ENCODE measurements at regions of chr18 and their contacts with region 1.

Region 1: GRCh38 chr18:11995445-11996189 is 14.3 kb downstream of the IMPA2 start:
- DNase-seq: peak; percentile 75
- ATAC-seq: peak; percentile 84
- H3K4me3 ChIP-seq: peak overlapping the region in 1 of 3 experiments; percentile 65; a peak in 3 of 6 replicates
- H3K27ac ChIP-seq: peak overlapping the region; percentile 70
- H3K4me1 ChIP-seq: peaks cover 97% of the 10 kb centered on the region
- H3K27me3 ChIP-seq: no peaks in the 10 kb centered on the region
- CTCF ChIP-seq: peak; percentile 91
- EP300 ChIP-seq: no peak
- POLR2A ChIP-seq: no peak
- RAD21 ChIP-seq: peak; percentile 92

Region 2: DNA sequence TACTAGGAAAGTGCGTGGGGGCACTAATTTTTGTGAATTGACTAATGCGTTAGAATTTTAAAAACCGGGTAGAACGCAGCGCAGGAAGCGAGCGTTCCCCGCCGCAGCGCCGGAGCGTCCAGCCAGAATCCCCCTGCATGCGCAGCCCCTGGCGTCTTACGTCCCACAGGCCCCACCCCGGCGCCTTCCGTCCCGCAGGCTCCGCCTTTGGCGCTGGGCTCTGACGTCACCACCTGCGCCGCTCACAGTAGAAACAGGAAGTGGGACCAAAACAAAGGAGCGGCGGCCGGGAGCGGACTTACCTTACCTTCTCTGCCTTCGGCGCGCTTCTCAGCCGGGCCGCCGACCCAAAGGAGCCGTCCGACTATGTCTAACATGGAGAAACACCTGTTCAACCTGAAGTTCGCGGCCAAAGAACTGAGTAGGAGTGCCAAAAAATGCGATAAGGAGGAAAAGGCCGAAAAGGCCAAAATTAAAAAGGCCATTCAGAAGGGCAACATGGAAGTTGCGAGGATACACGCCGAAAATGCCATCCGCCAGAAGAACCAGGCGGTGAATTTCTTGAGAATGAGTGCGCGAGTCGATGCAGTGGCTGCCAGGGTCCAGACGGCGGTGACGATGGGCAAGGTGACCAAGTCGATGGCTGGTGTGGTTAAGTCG is 144.3 kb before region 1 on chr18 and contains the start of gene CHMP1B:
- CTCF ChIA-PET with region 1: no interaction called
- POLR2A ChIA-PET with region 1: interaction called, 6 read pairs
- in situ Hi-C with region 1: no loop called
- intact Hi-C with region 1: loop called (anchors 10 kb)
- DNase-seq: peak; percentile 91
- ATAC-seq: peak; percentile 91
- H3K4me3 ChIP-seq: peak within 1 kb of the TSS; percentile 68 to 93 (median 83)
- H3K27ac ChIP-seq: peak within 1 kb of the TSS; percentile 80
- H3K4me1 ChIP-seq: peaks cover 49% of the 10 kb centered on the region
- H3K27me3 ChIP-seq: no peaks in the 10 kb centered on the region; a peak in 2 of 5 replicates
- CTCF ChIP-seq: no peak
- EP300 ChIP-seq: peak in 1 of 2 experiments; percentile 39; a peak in 2 of 4 replicates
- POLR2A ChIP-seq: peak; percentile 93 to 96
- RAD21 ChIP-seq: no peak
- total RNA-seq, gene CHMP1B: 18.8 and 24.0 TPM in 2 replicates

Region 3: DNA sequence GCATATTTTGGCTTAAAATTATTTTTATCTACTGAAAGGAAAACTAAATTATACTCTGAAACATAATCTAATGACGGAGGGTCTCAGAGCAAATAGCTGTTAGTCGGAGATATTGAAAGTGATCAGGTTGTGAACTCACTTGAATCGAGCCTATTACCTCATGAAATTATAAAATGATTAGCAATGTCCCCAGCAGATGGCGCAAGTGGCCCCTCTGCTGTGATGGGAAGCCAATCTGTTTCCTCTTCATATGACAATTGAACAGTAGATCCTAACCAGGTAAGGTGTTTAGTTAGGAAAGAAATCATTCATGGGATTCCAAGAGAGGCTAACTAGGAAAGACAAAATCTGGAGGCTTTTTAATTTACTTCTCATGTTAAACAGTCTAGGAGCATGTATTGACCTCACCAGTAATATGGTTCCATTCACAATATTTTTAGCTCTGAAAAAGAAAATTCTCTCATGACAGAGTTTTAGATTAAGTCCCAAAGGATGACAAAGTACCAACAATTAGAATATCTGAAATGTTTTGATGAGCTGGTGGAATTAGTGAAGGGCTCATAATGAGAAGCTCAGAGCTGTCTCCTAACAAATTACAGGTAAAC is 57.6 kb before region 1 on chr18:
- CTCF ChIA-PET with region 1: interaction called, 51 read pairs
- POLR2A ChIA-PET with region 1: interaction called, 24 read pairs
- in situ Hi-C with region 1: loop called (anchors 5 kb)
- intact Hi-C with region 1: loop called (anchors 1 kb)
- DNase-seq: peak; percentile 48
- ATAC-seq: peak; percentile 68
- H3K4me3 ChIP-seq: no peak overlapping the region
- H3K27ac ChIP-seq: no peak overlapping the region
- H3K4me1 ChIP-seq: no peaks in the 10 kb centered on the region
- H3K27me3 ChIP-seq: no peaks in the 10 kb centered on the region; a peak in 1 of 5 replicates
- CTCF ChIP-seq: peak; percentile 87
- EP300 ChIP-seq: no peak
- POLR2A ChIP-seq: no peak
- RAD21 ChIP-seq: peak; percentile 86

Region 4: DNA sequence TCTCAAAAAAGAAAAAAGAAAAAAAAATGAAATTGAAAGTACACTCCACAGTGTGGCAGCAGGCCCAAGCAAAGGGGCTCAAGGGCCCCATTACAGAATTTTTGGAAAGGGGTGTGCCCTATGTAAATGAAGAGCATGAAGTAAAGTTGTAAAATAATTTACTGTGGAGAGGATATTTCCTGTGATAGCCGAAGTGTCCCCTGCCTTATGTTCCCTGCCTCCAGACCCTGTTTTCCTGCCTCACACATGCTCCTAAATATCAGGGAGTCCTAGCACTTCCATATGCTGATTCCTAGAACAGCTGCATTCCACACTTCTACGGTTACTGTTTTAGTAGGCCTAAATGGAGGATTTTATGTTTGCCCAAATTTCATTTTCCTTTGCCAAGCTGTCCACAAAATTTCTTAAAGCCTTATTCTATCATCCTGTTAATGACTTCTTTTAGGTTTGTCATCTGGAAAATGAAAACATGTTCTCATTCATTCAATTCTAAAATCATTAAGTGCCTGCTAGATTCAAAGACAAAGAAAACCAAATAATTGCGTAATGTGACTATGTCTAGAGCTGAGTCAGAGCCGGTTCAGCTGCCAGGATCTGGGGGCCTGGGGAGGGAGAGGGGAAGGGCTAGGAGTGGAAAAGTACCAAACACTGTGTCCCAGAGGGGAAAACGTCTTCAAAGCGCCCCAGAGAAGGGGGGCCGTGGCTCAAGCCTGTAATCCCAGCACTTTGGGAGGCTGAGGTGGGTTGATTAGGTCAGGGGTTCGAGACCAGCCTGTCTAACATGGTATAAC is 40.2 kb before region 1 on chr18:
- CTCF ChIA-PET with region 1: no interaction called
- POLR2A ChIA-PET with region 1: interaction called, 23 read pairs
- in situ Hi-C with region 1: no loop called
- intact Hi-C with region 1: no loop called
- DNase-seq: peak; percentile 76
- ATAC-seq: peak; percentile 43
- H3K4me3 ChIP-seq: peak overlapping the region in 1 of 3 experiments; percentile 5; a peak in 1 of 6 replicates
- H3K27ac ChIP-seq: peak overlapping the region; percentile 72
- H3K4me1 ChIP-seq: peaks cover 51% of the 10 kb centered on the region
- H3K27me3 ChIP-seq: no peaks in the 10 kb centered on the region
- CTCF ChIP-seq: no peak
- EP300 ChIP-seq: peak in 1 of 2 experiments; percentile 87; a peak in 2 of 4 replicates
- POLR2A ChIP-seq: no peak
- RAD21 ChIP-seq: no peak

Region 5: GRCh38 chr18:12008181-12008767 is 12.7 kb after region 1 on chr18:
- CTCF ChIA-PET with region 1: no interaction called
- POLR2A ChIA-PET with region 1: interaction called, 15 read pairs
- in situ Hi-C with region 1: no loop called
- intact Hi-C with region 1: no loop called
- DNase-seq: peak; percentile 96
- ATAC-seq: peak; percentile 97
- H3K4me3 ChIP-seq: 0 out of 6 replicates have a peak overlapping the region, but pooled peaks of 1 of the 3 experiments have one; percentile 9
- H3K27ac ChIP-seq: peak overlapping the region; percentile 76
- H3K4me1 ChIP-seq: peaks cover 30% of the 10 kb centered on the region
- H3K27me3 ChIP-seq: no peaks in the 10 kb centered on the region
- CTCF ChIP-seq: no peak; the same call in 1 of the 2 replicates
- EP300 ChIP-seq: peak; percentile 81 to 92; a peak in 3 of 4 replicates
- POLR2A ChIP-seq: no peak
- RAD21 ChIP-seq: no peak

Region 6: GRCh38 chr18:12031846-12032245 is 36.2 kb after region 1 on chr18:
- CTCF ChIA-PET with region 1: no interaction called
- POLR2A ChIA-PET with region 1: no interaction called
- in situ Hi-C with region 1: no loop called
- intact Hi-C with region 1: no loop called
- DNase-seq: no peak
- ATAC-seq: no peak
- H3K4me3 ChIP-seq: no peak overlapping the region
- H3K27ac ChIP-seq: no peak overlapping the region
- H3K4me1 ChIP-seq: peaks cover 17% of the 10 kb centered on the region
- H3K27me3 ChIP-seq: no peaks in the 10 kb centered on the region
- CTCF ChIP-seq: no peak
- EP300 ChIP-seq: no peak
- POLR2A ChIP-seq: no peak
- RAD21 ChIP-seq: no peak

Region 7: DNA sequence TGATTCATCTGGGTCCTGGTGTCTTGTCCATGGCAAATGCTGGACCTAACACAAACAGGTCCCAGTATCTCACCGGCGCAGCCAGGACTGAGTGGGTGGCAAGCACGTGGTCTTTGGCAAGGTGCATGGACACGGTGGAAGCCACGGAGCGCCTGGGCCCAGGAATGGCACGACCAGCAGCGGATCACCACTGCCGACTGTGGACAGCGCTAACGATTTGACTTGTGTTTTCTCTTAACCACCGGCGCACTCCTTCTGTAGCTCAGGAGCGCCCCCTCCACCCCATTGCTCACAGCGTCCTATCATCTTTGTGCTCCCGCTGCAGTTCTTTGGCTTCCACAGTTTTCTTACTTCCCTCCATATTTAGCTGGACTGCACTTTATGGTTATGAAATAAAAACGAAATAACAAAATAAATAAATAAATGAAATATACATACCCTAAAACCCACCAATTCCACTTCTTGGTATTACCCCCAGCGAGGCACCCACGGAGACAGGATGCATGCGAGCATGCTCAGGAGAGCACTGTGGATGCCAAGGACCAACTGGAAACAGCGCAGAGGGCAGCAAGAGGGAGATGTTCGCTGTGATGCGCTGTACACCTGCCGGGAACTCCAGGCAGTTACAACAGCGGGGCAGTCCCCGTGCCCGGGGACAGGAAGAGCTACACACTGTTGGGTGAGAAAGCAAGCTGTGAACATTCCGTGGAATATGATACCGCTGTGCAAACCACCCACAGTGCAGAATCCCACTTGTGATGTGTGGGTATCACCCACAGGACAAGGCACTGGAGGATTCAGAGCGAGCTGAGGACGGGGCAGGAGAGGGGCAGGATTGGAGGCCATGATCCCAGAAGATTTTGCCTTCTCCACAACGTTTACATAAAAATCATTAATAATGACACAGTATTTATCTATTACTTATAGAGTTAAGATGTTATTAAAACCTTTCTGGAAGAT is 251.5 kb after region 1 on chr18:
- CTCF ChIA-PET with region 1: no interaction called
- POLR2A ChIA-PET with region 1: no interaction called
- in situ Hi-C with region 1: no loop called
- intact Hi-C with region 1: no loop called
- DNase-seq: peak; percentile 10
- ATAC-seq: peak; percentile 77
- H3K4me3 ChIP-seq: no peak overlapping the region
- H3K27ac ChIP-seq: no peak overlapping the region
- H3K4me1 ChIP-seq: peaks cover 5% of the 10 kb centered on the region; the same call in 1 of the 2 replicates
- H3K27me3 ChIP-seq: peaks cover 4 to 35% of the 10 kb centered on the region in 2 experiments; a peak in 4 of 5 replicates
- CTCF ChIP-seq: peak; percentile 50
- EP300 ChIP-seq: no peak
- POLR2A ChIP-seq: no peak
- RAD21 ChIP-seq: 0 out of 2 replicates have a peak, but pooled peaks have one; percentile 16

Region 8: DNA sequence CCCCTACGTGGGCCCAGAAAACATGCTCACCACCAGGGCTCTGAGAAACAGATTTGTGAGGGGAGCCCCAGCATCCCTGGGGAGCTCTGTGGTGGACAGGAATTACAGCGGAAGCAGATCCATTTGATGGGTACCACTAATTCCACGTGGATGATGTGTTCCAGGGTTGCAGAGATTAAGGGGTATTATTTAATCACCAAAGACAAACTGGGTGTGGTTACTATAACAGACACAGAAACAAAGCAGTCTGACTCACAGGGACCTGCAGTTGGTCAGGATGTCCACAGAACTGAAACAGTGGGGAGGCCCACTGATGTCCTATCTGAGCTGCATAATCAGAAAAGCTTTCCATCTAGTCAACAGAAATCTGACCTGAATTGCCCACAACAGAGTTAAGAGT is 773.0 kb after region 1 on chr18:
- CTCF ChIA-PET with region 1: no interaction called
- POLR2A ChIA-PET with region 1: no interaction called
- in situ Hi-C with region 1: no loop called
- intact Hi-C with region 1: no loop called
- DNase-seq: no peak
- ATAC-seq: no peak
- H3K4me3 ChIP-seq: no peak overlapping the region; a peak in 1 of 6 replicates
- H3K27ac ChIP-seq: no peak overlapping the region
- H3K4me1 ChIP-seq: peaks cover 39% of the 10 kb centered on the region
- H3K27me3 ChIP-seq: no peaks in the 10 kb centered on the region
- CTCF ChIP-seq: no peak
- EP300 ChIP-seq: no peak
- POLR2A ChIP-seq: no peak
- RAD21 ChIP-seq: no peak

Measured in HepG2 (cell line).